ENCODE measurements at regions of chr16 and their contacts with region 1.

Region 1: GRCh38 chr16:11546608-11547061 is 40.1 kb downstream of the LITAF start:
- DNase-seq: no peak
- H3K4me3 ChIP-seq: no peak overlapping the region
- H3K27ac ChIP-seq: no peak overlapping the region
- H3K4me1 ChIP-seq: 0 out of 2 replicates have a peak, but pooled peaks cover 4% of the 10 kb centered on the region
- H3K27me3 ChIP-seq: no peaks in the 10 kb centered on the region
- CTCF ChIP-seq: no peak

Region 2: DNA sequence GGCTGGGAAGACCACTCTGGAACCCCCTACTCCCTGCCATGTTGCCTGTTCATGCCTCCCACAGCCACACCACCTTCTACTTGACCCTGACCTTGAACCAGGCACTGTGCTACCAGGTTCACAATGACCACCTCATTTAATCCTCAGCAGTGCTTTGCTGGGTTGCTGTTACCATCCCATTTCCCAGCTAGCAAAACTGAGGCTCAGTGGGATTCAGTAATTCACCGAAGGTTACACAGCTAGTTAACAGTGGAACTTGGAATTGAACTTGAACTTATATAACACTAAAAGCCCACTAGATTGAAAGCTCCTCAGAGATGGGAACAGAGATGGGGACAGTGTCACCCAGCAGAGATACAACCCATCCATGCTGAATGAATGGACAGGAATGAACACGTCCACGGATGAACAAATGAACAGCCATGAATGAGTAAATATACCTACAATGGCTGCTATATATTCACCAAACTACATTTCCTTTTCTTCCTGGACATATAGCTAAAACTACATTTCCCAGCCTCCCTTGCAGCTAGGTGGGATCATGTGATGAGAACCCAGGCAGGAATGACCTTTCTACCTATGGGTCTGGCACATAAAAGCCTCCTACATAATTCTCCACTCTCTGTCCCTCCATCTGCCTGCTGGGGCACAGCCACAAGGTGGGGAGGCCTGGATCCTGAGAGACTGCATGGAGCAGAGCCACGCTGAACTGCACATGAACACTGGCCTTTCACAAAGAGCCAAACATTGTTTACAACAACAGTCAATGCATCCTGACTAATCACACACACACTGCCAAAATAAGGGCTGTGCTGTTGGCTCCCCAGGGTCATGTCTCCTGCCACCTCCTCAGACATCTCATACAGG is 106.6 kb before region 1 on chr16:
- CTCF ChIA-PET with region 1: no interaction called
- POLR2A ChIA-PET with region 1: interaction called, 14 read pairs
- intact Hi-C with region 1: no loop called
- DNase-seq: no peak
- H3K4me3 ChIP-seq: no peak overlapping the region
- H3K27ac ChIP-seq: no peak overlapping the region
- H3K4me1 ChIP-seq: no peaks in the 10 kb centered on the region
- H3K27me3 ChIP-seq: peaks cover 4% of the 10 kb centered on the region; the same call in 1 of the 2 replicates
- CTCF ChIP-seq: no peak

Region 3: GRCh38 chr16:11629071-11629962 is 82.7 kb after region 1 on chr16:
- CTCF ChIA-PET with region 1: interaction called, 10 read pairs
- POLR2A ChIA-PET with region 1: no interaction called
- intact Hi-C with region 1: no loop called
- DNase-seq: no peak
- H3K4me3 ChIP-seq: no peak overlapping the region
- H3K27ac ChIP-seq: peak overlapping the region; percentile 98
- H3K4me1 ChIP-seq: peaks cover 49% of the 10 kb centered on the region
- H3K27me3 ChIP-seq: no peaks in the 10 kb centered on the region
- CTCF ChIP-seq: no peak

Region 4: DNA sequence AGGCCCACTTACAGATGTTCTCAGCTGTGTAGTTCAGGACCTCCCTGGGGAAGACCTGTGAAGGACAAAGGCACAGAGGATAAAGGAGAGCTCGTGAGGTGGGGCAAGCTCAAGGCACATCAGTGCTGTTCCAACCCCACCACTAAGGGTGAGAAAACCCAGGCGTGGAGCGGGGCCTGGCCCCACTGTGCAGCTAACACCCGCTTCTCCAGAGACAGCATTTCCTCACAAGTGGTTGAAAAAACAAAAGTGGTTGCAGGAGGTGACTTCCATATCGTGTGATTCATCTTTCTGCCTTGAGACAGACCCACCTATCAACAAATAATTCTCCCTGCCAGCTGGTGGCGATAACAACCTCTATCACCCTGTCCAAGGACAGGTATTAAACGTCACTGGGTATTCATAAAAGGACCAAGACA is 151.6 kb after region 1 on chr16:
- CTCF ChIA-PET with region 1: no interaction called
- POLR2A ChIA-PET with region 1: no interaction called
- intact Hi-C with region 1: no loop called
- DNase-seq: no peak
- H3K4me3 ChIP-seq: no peak overlapping the region
- H3K27ac ChIP-seq: no peak overlapping the region
- H3K4me1 ChIP-seq: 0 out of 2 replicates have a peak, but pooled peaks cover 7% of the 10 kb centered on the region
- H3K27me3 ChIP-seq: no peaks in the 10 kb centered on the region
- CTCF ChIP-seq: no peak; the same call in 1 of the 2 replicates

Measured in PC-9 (cell line).